GM10248 (cell line): ENCODE measurements at regions of chr19 and their contacts with region 1.

Region 1: DNA sequence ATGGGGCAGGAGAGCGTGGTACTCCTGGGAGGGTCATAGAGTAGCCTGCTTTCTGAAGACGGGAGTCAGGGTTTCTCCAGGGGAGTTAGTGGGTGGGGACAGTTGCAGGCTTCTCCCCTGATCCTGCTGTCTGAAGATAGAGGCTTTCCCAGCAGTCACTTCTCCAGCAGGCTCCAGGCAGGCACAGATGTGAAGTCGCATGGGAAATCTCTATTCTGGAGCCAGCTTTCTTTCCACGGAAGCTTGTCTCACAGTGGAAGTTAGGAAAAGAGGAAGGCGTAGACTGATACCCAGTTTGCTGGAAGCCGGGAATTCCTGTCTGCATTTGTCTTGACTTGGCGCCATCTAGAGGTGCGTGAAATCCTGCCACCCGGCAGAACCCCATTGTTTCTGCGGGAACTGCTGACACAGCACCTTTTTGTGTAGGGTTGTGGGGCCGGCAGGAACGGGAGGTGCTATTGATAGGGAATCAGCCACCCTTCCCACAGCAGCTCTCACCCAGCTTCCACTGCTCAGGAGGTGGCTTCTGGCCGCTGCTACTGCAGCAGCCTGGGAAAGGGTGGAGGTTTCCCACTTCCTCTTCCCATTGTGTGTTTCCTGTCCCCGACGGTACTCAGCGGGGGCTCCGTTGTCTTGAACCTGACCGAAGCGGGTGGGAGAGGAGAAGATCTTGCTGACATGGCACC is 28.5 kb upstream of the NPAS1 start:
- DNase-seq: peak; percentile 70
- CTCF ChIP-seq: peak; percentile 91

Region 2: GRCh38 chr19:46753420-46754155 is 237.5 kb before region 1 on chr19:
- CTCF ChIA-PET with region 1: interaction called, 12 read pairs
- POLR2A ChIA-PET with region 1: no interaction called
- DNase-seq: peak; percentile 78
- CTCF ChIP-seq: peak; percentile 77

Region 3: DNA sequence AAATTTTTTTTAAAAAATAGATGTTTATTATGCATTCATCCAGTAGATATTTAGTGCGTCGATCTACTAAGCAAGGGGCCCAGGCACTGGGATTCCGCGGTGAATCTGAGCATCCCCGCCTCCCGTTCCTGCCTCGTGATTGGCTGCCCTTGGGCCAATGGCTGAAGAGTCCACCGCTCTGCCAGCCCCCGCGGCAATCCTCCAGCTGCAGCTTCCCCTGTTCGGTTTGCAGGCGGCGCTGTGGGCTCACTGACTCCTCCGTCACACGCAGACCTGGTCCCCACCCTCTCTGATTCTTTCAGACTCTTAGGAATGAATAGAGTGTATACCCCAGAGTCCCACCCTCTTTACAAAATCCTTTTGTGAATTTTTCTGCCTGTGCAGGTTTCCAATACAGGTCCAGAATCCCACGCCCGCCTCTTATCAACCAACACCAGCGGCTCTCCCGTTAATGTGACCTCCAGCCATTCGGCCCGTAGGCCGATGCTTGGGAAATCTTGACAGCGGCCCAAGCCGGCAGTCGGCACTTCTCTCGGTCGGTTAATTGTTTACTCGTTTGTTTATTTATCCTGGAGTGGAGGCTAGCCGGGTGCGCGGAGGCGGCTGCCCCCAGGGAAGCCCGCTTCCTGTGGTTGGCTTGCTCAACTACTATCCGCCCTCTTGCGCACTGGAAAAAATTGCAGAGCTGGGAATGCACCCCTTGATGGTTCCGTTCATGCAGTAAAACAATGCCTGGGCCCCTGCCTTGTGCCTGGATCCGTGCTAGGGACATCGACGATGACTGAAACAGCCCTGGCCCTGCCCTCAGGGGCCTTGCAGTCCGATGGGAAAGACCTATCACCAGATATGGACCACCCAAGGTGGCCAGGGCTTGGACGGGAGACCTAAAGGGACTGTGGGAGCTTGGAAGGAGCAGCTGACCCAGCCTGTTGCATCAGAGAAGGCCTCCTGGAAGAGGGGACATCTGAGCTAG is 134.8 kb before region 1 on chr19:
- CTCF ChIA-PET with region 1: interaction called, 28 read pairs
- POLR2A ChIA-PET with region 1: no interaction called
- DNase-seq: peak; percentile 90
- CTCF ChIP-seq: peak; percentile 87

Region 4: DNA sequence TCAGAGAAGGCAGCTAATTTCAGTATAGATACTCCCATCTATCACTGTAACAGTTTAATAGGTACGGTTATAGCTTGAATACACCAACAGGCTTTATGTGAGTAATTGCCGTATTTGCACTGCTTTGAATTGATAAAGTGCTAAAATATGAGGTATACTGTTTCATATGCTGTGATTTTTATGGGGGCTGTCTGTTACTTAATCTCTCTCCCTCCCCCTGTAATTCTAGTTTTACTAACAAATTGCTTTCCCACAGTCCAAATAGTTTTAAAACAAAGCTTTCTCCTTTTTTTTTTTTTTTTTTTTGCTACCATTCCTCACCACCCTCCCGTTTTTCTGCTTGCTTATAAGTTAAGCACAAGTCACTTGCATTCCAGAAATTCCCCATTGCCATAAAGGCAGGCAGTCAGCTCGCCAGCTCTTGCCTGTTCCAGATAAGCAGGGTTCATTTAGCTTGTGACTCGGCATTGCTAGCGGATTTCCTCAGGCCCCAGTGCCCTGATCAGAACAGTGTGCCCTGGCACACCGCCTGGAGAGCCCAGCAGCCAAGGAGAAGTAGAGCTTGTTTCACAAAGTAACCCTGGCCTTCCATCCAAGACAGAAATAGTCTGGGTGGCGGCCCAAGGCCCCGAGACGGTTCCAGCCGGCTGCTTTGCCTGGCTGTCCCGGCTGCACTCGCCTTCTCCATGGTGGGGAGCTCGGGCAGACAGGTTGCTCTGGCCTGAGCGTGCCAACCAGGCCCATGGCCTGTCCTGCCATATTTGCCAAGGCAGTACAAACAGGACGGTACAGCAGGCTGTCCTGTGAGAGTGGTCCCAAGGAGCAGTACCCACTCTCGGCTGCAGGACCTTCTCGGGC is 15.0 kb before region 1 on chr19:
- CTCF ChIA-PET with region 1: interaction called, 25 read pairs
- POLR2A ChIA-PET with region 1: no interaction called
- DNase-seq: no peak
- CTCF ChIP-seq: no peak

Region 5: GRCh38 chr19:47002107-47002766 is 11.1 kb after region 1 on chr19:
- CTCF ChIA-PET with region 1: interaction called, 31 read pairs
- POLR2A ChIA-PET with region 1: no interaction called
- DNase-seq: no peak
- CTCF ChIP-seq: no peak